Gastrocnemius medialis (tissue), 4 donors: ENCODE measurements at regions of chrX and their contacts with region 1.

Region 1: DNA sequence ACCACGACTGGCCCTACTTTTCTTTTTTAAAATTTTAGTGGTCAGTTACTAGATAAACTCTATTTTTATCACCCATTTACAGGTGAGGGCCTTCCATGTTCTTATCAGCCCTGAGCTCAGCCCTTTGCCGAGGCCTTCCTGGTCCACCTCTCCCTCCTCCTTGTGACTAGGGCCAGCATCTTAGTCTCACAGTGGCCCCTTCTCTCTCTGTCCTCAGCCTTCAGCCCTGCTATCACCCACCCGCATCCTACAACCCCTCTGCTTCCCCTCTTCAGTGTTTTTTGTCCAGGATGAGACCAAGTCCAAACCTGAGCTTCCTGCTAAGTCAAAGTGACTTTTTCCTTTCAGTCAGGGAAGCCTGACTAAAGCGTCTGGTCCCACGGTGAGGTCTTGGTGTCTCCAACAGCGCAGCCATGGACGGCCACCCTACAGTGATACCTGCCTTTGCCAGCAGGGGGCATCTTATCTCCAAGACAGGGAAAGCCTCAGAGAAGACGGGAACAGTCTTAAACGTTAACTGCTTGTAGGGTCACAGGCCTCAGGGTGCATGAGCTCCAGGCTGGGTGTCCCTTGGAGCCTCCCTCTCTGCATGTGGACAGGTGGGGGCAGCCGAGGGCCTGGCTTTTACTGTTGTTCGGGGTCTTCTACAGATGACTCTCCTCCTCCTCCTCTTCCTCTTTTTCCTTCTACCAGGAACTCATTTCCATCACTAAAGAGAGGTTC is 11.7 kb upstream of the GAGE10 start:
- DNase-seq: peak in 1 of 2 donors; percentile 28
- ATAC-seq: peak; percentile 50 to 61
- H3K4me3 ChIP-seq: no peak overlapping the region
- H3K27ac ChIP-seq: no peak overlapping the region
- H3K4me1 ChIP-seq: no peaks in the 10 kb centered on the region
- H3K27me3 ChIP-seq: no peaks in the 10 kb centered on the region
- CTCF ChIP-seq: peak; percentile 16 to 62 (median 47)
- POLR2A ChIP-seq: no peak

Region 2: DNA sequence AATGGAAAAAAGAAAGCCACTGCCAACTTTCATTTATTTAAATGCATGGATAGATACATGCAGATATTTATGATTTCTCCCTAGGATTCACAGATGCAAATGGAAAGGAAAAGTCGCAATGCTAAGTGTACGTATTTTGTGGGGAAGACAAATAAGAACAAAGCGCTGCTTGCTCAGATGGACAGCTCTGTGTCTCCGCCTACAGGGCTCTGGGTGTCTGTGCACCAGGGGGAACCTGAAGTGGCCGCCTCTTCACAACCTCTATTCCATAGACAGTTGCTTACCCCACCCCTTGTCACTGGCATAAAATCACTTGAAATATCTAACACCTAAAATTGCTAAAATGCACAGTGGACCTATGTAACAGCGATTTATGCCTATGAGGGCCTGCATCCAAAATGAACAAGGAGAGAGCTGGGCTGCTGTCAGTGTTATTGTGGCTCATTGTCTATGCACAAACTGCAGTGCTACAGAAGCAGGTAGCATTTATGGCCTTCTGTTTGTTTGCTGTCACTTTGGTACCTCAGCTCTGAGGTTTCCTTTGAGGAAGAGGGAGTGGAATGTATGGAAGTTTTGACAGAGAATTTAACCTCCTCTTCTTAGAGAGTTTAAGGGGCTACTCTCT is 462.6 kb after region 1 on chrX:
- in situ Hi-C with region 1: no loop called
- intact Hi-C with region 1: loop called (anchors 5 kb)
- DNase-seq: peak; percentile 10 to 20
- ATAC-seq: peak in 1 of 2 donors; percentile 60
- H3K4me3 ChIP-seq: no peak overlapping the region
- H3K27ac ChIP-seq: no peak overlapping the region
- H3K4me1 ChIP-seq: no peaks in the 10 kb centered on the region
- H3K27me3 ChIP-seq: no peaks in the 10 kb centered on the region
- CTCF ChIP-seq: peak; percentile 53 to 73 (median 62)
- POLR2A ChIP-seq: no peak

Region 3: GRCh38 chrX:49838374-49838773 is 546.6 kb after region 1 on chrX:
- in situ Hi-C with region 1: no loop called
- intact Hi-C with region 1: loop called (anchors 5 kb)
- DNase-seq: no peak
- ATAC-seq: no peak
- H3K4me3 ChIP-seq: no peak overlapping the region
- H3K27ac ChIP-seq: no peak overlapping the region
- H3K4me1 ChIP-seq: no peaks in the 10 kb centered on the region
- H3K27me3 ChIP-seq: no peaks in the 10 kb centered on the region
- CTCF ChIP-seq: peak in 4 of 5 experiments; percentile 23 to 53 (median 45)
- POLR2A ChIP-seq: no peak

Region 4: GRCh38 chrX:49878834-49879659 is 587.3 kb after region 1 on chrX and contains the start of gene USP27X:
- in situ Hi-C with region 1: no loop called
- intact Hi-C with region 1: loop called (anchors 5 kb)
- DNase-seq: peak; percentile 47 to 52
- ATAC-seq: peak; percentile 79 to 86
- H3K4me3 ChIP-seq: peak within 1 kb of the TSS; percentile 51 to 69 (median 68)
- H3K27ac ChIP-seq: peak within 1 kb of the TSS; percentile 73 to 86 (median 78)
- H3K4me1 ChIP-seq: peaks cover 0 to 8% of the 10 kb centered on the region in 2 donors
- H3K27me3 ChIP-seq: no peaks in the 10 kb centered on the region
- CTCF ChIP-seq: peak in 4 of 5 experiments; percentile 33 to 57 (median 48)
- POLR2A ChIP-seq: peak; percentile 21 to 25
- total RNA-seq, gene USP27X: 1.0 to 2.0 (median 1.7) TPM